HepG2 (cell line): ENCODE measurements at regions of chr2 and their contacts with region 1.

Region 1: DNA sequence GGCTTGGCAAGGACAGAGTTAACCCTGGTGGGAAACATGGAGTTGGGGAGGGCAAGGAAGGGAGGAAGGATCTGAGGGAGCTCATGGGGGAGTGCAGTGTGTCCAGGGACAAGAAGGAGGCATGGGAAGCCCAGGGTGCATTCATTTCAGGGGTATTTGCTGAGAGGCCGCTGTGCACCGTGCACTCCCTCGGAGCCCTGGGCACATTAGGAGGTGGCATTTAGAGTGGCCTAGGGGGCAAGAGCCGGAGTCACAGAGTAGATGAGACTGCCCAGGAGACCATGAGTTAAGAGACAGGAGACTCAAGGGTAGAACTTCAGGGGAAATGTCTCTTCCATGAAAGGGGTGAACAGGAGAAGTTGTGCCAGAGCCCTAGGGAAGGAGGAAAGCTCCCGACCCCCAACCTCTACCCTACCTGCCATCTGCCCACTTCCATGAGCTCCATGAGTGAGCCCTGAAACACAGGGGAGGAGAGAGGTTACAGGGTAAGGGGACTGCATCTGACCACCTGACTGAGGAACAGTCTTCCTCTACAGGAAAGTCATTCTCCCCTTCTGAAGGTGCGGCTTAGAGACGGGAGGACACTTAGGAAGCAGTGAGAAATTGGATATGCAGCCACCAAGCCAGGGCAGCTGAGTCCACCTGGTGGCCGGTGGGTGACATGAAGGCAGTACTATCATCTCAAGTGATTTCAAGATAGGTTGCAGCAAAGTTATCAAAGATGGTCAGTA is 58.5 kb upstream of the COPS8 start:
- DNase-seq: peak; percentile 45
- ATAC-seq: peak; percentile 83
- H3K4me3 ChIP-seq: no peak overlapping the region
- H3K27ac ChIP-seq: no peak overlapping the region
- H3K4me1 ChIP-seq: peaks cover 14% of the 10 kb centered on the region
- H3K27me3 ChIP-seq: no peaks in the 10 kb centered on the region
- CTCF ChIP-seq: peak; percentile 97
- EP300 ChIP-seq: no peak
- POLR2A ChIP-seq: no peak
- RAD21 ChIP-seq: peak; percentile 91

Region 2: DNA sequence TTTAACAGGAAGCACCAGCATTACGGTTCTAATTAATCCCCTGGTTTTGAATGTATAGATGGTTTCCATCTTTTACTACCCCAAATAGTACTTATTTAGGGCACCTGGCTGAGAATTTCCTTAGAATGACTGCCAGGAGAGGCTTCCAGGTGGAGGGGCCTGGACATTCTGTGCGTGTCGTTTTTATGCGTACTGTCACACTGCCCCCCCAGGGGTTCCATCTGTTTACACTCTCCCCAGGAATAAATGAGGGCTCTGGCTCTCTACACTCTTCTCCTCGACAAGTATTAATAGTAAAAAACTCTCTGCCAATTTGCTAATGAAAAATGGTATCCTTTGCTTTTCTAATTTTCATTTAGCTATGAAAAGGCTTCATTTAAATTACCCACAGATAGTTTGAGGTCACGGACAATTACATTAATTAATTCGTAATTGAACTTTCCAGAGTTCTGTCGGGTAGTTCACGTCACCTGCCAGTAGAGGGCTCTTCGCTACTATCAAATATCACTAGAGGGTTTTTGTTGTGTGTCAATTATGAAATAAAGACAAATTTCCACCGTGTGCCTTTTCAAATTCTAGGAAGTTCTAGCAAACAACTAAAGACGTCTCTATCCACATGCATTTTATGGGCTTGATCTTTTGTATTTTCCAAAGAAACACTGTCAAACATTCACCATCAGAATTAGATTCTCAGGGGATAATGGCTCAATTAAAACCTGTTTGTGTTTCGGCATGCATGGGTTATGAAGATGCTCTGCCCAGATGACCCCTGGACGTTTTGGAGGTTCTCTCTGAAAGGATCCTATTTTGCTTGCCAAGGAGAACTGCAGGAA is 674.2 kb before region 1 on chr2:
- CTCF ChIA-PET with region 1: interaction called, 13 read pairs
- POLR2A ChIA-PET with region 1: no interaction called
- in situ Hi-C with region 1: no loop called
- intact Hi-C with region 1: loop called (anchors 1 kb)
- DNase-seq: no peak
- ATAC-seq: no peak
- H3K4me3 ChIP-seq: no peak overlapping the region
- H3K27ac ChIP-seq: no peak overlapping the region
- H3K4me1 ChIP-seq: no peaks in the 10 kb centered on the region
- H3K27me3 ChIP-seq: peaks cover 0 to 43% of the 10 kb centered on the region in 2 experiments; a peak in 4 of 5 replicates
- CTCF ChIP-seq: peak; percentile 72
- EP300 ChIP-seq: no peak
- POLR2A ChIP-seq: no peak
- RAD21 ChIP-seq: peak; percentile 55; the same call in 1 of the 2 replicates

Region 3: GRCh38 chr2:236562434-236562833 is 464.7 kb before region 1 on chr2:
- CTCF ChIA-PET with region 1: interaction called, 4 read pairs
- POLR2A ChIA-PET with region 1: no interaction called
- in situ Hi-C with region 1: no loop called
- intact Hi-C with region 1: loop called (anchors 1 kb)
- DNase-seq: peak; percentile 55
- ATAC-seq: peak; percentile 85
- H3K4me3 ChIP-seq: no peak overlapping the region
- H3K27ac ChIP-seq: no peak overlapping the region
- H3K4me1 ChIP-seq: no peaks in the 10 kb centered on the region
- H3K27me3 ChIP-seq: peaks cover 0 to 22% of the 10 kb centered on the region in 2 experiments; a peak in 3 of 5 replicates
- CTCF ChIP-seq: peak; percentile 62
- EP300 ChIP-seq: no peak
- POLR2A ChIP-seq: no peak
- RAD21 ChIP-seq: no peak

Region 4: GRCh38 chr2:236818281-236819045 is 208.7 kb before region 1 on chr2:
- CTCF ChIA-PET with region 1: no interaction called
- POLR2A ChIA-PET with region 1: no interaction called
- in situ Hi-C with region 1: no loop called
- intact Hi-C with region 1: loop called (anchors 10 kb)
- DNase-seq: no peak
- ATAC-seq: no peak
- H3K4me3 ChIP-seq: no peak overlapping the region
- H3K27ac ChIP-seq: no peak overlapping the region
- H3K4me1 ChIP-seq: no peaks in the 10 kb centered on the region
- H3K27me3 ChIP-seq: peaks cover 0 to 4% of the 10 kb centered on the region in 2 experiments; a peak in 2 of 5 replicates
- CTCF ChIP-seq: no peak
- EP300 ChIP-seq: no peak
- POLR2A ChIP-seq: no peak
- RAD21 ChIP-seq: no peak